ENCODE measurements at regions of chr19 and their contacts with region 1.

Region 1: DNA sequence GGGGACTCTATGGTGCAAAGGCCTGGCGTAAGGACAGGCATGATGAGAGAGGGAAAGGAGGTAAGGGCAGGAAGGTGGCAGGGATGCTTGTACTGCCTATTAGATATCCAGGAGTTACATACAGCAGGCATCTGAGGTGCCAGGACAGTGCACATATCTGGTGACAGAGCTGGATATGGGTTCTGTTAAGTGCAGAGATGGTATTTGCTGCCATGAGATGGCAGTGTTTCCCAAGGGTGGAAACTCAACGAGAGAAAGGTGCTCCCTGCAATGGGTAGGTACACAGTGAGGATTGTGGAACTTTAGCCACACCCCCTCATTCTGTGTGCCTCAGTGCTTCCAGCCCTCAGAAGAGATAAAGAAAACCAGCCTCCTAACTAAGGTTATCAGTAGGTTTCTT is 6.9 kb downstream of the TNPO2 start:
- DNase-seq: peak in 2 of 3 donors; percentile 18 to 43
- H3K4me3 ChIP-seq: no peak overlapping the region
- H3K4me3 Mint-ChIP-seq: no peak overlapping the region
- H3K27ac ChIP-seq: no peak overlapping the region
- H3K27ac Mint-ChIP-seq: peak overlapping the region in 3 of 7 donors; percentile 50 to 79 (median 63)
- H3K4me1 ChIP-seq: peaks cover 14 to 17% of the 10 kb centered on the region in 2 donors
- H3K4me1 Mint-ChIP-seq: peaks cover 15% of the 10 kb centered on the region
- H3K27me3 ChIP-seq: no peaks in the 10 kb centered on the region
- H3K27me3 Mint-ChIP-seq: peaks cover 0 to 5% (median 0%) of the 10 kb centered on the region in 3 donors
- CTCF ChIP-seq: peak; percentile 49

Region 2: DNA sequence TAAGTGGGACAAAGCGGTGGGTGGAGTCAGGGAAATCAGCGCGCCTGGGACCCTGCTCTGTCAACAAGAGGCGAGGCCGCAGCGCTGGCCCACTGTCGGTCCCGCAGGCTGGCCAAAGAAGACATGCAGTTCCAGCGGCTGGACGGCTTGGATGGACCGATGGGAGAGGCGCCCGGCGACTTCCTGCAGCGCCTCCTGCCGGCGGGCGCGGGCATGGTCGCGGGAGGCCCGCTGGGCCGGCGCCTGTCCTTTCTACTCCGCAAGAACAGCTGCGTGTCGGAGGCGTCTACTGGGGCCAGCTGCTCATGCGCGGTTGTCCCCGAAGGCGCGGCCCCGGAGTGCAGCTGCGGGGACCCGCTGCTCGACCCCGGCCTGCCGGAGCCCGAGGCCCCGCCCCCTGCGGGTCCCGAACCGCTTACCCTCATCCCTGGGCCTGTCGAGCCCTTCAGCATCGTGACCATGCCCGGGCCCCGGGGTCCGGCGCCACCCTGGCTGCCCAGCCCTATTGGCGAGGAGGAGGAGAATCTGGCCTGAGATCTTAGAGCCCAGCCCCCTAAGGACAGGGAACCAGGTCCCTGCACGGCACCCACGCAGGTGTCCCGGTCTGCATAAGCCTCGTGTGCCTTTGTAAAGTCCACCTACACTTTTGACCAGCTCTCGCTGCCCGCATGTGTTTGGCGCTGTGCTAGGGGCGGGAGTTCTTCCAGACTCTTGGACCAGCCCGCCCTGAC is 40.8 kb after region 1 on chr19:
- intact Hi-C with region 1: loop called in 1 of 2 experiments (anchors 2 kb)
- DNase-seq: peak; percentile 54 to 72 (median 65)
- H3K4me3 ChIP-seq: peak overlapping the region in 1 of 3 experiments; percentile 46
- H3K4me3 Mint-ChIP-seq: peak overlapping the region; percentile 43 to 78
- H3K27ac ChIP-seq: no peak overlapping the region
- H3K27ac Mint-ChIP-seq: no peak overlapping the region
- H3K4me1 ChIP-seq: peaks cover 4 to 8% of the 10 kb centered on the region in 2 donors
- H3K4me1 Mint-ChIP-seq: peaks cover 12% of the 10 kb centered on the region
- H3K27me3 ChIP-seq: peaks cover 0 to 8% of the 10 kb centered on the region in 2 donors
- H3K27me3 Mint-ChIP-seq: peaks cover 10 to 21% (median 16%) of the 10 kb centered on the region in 3 donors
- CTCF ChIP-seq: peak; percentile 99

Measured in CD14-positive monocyte (primary cell).